Psoas muscle (tissue), 8 donors: ENCODE measurements at regions of chr17 and their contacts with region 1.

Region 1: DNA sequence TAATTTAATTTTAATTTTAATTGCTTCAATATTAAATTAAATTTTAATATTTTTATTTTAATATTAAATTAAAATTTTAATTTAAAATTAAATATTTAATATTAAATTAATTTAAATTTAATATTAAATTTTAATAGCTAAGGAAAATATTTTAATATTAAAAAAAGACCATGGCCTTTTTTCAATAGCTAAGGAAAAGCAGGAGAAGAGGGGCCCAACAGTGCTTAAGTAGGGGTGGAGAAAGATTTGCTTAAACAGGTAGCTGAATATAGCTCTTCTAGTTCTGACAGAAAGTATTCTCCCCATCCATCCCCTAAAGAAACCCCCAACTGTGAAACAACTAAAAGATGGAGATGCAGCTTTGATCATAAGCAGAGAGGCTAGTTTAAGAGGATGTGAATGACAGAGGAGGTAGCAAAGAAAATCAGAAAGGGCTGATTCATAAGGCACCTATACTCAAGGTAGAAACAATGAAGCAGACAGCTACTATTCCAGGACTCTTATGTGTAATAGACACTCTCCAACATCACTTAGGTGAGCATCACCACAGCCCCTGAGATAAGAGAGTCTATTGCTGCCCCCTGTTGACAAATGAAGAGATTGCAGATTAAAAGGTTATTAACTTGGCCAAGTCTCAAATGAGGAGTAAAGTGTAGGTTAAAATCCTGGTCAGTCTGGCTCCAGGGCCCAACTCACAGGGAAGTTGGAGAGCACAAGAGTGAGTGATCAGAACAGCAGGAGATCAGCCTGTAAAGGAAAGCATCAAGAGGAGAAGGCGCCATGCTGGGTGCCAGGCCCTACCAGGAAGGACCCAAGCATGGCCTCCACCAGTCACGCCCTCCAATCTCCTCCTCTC is 7.8 kb upstream of the RNASEK start:
- DNase-seq: peak in 1 of 2 donors; percentile 49
- ATAC-seq: peak; percentile 60 to 86 (median 76)
- H3K4me3 ChIP-seq: no peak overlapping the region
- H3K27ac ChIP-seq: no peak overlapping the region
- H3K4me1 ChIP-seq: no peaks in the 10 kb centered on the region
- H3K27me3 ChIP-seq: no peaks in the 10 kb centered on the region
- CTCF ChIP-seq: peak; percentile 64

Region 2: GRCh38 chr17:6666077-6666521 is 338.5 kb before region 1 on chr17:
- intact Hi-C with region 1: loop called (anchors 5 to 10 kb)
- DNase-seq: peak; percentile 61 to 79
- ATAC-seq: peak; percentile 89 to 95 (median 94)
- H3K4me3 ChIP-seq: no peak overlapping the region
- H3K27ac ChIP-seq: no peak overlapping the region
- H3K4me1 ChIP-seq: no peaks in the 10 kb centered on the region
- H3K27me3 ChIP-seq: peaks cover 0 to 13% (median 3%) of the 10 kb centered on the region in 3 donors
- CTCF ChIP-seq: peak; percentile 79

Region 3: DNA sequence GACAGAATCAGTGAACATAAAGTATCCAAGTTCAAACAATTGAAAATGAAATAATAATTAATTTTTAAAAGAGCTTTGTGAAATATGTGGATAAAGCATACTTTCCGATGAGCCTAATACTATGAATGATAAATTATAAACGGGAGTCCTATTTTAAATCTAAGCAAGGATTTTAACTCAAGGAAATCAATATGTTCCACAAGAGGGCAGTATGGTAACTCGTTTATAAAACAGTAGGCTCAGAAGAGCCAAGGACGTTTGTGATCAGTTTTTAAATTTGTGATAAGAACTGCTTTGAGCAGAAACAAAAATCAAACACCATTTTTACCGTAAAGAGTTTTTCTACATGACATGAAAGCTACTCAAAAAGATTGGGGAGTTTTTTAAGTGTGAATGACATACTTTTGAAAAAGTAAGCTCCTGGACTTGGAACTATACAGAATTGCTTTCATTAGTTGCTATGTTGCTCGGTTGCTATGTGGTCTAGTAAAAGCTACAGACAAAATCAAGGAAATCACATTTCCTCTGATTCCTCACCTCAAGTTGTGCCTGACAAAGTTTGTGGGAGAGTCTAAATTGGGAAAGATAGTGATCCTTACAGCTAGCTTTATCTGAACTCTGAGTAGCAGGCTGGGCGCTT is 161.3 kb before region 1 on chr17:
- intact Hi-C with region 1: loop called in 1 of 2 experiments (anchors 10 kb)
- DNase-seq: no peak
- ATAC-seq: no peak
- H3K4me3 ChIP-seq: no peak overlapping the region
- H3K27ac ChIP-seq: no peak overlapping the region
- H3K4me1 ChIP-seq: no peaks in the 10 kb centered on the region
- H3K27me3 ChIP-seq: peaks cover 0 to 33% (median 2%) of the 10 kb centered on the region in 3 donors
- CTCF ChIP-seq: peak; percentile 59

Region 4: GRCh38 chr17:6913608-6914443 is 90.8 kb before region 1 on chr17:
- intact Hi-C with region 1: loop called (anchors 1 to 5 kb)
- DNase-seq: peak; percentile 77 to 83
- ATAC-seq: peak; percentile 78 to 91 (median 84)
- H3K4me3 ChIP-seq: peak overlapping the region; percentile 57
- H3K27ac ChIP-seq: no peak overlapping the region
- H3K4me1 ChIP-seq: peaks cover 5% of the 10 kb centered on the region
- H3K27me3 ChIP-seq: no peaks in the 10 kb centered on the region
- CTCF ChIP-seq: peak; percentile 82